ENCODE measurements at regions of chr12 and their contacts with region 1.

Region 1: DNA sequence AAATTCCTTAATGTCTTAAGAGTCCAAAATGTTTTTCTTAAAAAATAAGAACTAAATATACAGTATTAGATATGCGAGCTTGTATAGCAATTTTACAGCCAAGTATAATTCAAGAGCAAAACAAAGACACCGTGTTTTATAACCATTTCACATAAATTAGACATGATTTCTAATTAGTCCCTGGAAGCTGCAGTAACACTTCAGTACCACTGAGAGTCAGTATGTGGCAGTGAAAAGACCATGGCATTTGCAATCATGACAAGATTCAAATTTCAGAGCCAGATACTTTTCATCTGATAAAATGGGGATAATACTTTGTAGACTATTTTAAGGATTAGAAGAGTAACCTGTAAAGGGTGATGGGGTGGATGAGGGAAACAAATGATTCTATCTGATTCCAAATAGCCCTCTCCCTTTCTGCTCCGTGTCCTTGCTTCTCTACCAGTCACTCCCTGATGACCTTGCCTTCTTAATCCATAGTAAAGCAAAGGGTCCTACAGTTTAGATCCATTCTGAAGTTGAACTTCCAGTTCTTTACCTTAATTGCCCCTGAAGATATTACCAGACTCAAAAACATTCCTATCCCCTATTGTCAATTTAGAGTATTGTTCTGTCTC is 145.4 kb upstream of the ABCD2 start:
- ATAC-seq: peak in 4 of 8 experiments; percentile 37 to 58 (median 50)
- H3K4me3 ChIP-seq: no peak overlapping the region
- H3K27ac ChIP-seq: no peak overlapping the region
- H3K4me1 ChIP-seq: peaks cover 3 to 4% of the 10 kb centered on the region in 2 donors

Region 2: GRCh38 chr12:39867631-39868327 is 102.7 kb after region 1 on chr12:
- in situ Hi-C with region 1: no loop called
- ATAC-seq: no peak
- H3K4me3 ChIP-seq: no peak overlapping the region
- H3K27ac ChIP-seq: no peak overlapping the region
- H3K4me1 ChIP-seq: no peaks in the 10 kb centered on the region

Region 3: DNA sequence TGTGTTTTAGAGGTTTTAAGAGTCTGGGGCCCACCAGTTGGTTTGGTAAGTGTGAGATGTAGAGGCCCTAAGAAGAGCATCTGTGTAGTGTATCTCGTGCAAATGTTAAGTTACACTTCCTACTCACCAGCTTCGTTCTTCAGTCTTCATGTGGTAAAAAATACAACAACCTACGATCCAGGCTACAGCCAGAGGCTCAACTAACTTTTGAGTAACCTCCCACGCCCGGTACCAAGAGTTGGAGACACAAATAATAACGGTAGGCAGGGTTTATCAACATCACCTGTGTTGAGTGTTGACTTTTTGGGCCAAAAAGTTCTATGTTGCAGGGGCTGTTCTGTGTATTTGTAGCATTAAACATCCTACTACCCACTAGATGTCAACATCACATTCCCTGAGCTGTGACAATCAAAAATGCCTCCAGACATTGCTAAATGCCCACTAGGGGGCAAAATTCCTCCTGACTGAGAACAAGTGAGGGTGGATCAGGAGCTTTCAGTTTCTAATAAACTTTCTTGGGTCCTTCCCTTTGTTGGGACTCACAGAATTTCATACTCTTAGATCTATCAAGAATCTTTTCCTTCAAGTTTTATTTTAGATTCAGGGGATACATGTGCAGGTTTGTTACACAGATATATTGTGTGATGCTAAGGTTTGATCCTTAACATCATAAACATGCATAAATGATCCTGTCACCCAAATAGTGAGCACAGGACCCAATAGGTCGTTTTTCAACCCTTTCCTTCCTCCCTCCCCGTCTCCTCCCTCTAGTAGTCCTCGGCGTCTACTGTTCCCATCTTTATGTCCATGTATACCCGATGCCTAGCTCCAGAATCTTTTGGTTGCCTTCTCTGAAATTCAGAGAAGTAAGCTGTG is 246.1 kb after region 1 on chr12:
- in situ Hi-C with region 1: loop called in 1 of 9 experiments (anchors 25 kb)
- ATAC-seq: peak in 4 of 8 experiments; percentile 76 to 97 (median 92)
- H3K4me3 ChIP-seq: no peak overlapping the region
- H3K27ac ChIP-seq: no peak overlapping the region
- H3K4me1 ChIP-seq: no peaks in the 10 kb centered on the region

Region 4: GRCh38 chr12:40107098-40107802 is 342.2 kb after region 1 on chr12:
- in situ Hi-C with region 1: loop called in 6 of 9 experiments (anchors 10 to 25 kb)
- ATAC-seq: peak in 6 of 8 experiments; percentile 7 to 21 (median 8)
- H3K4me3 ChIP-seq: no peak overlapping the region
- H3K27ac ChIP-seq: no peak overlapping the region
- H3K4me1 ChIP-seq: peaks cover 7 to 19% of the 10 kb centered on the region in 2 donors

Region 5: DNA sequence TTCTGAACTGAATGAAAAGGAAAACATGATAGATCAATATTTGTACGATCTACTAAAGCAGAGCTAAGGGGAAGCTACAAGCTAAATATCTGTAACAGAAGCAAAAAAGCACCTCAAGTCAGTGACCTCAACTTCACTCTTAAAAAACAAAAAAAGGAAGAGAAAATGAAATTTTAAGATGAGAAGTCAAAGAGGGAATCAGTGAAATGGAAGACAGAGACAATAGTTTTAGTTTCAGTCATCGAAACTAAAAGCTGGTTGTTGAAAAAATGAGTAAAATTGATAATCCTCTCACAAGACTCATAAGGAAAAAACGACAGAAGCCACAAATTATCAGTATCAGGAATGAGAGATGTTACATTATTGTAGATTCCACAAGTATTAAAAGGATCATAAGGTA is 352.8 kb after region 1 on chr12:
- in situ Hi-C with region 1: loop called in 5 of 9 experiments (anchors 10 to 25 kb)
- ATAC-seq: no peak
- H3K4me3 ChIP-seq: no peak overlapping the region
- H3K27ac ChIP-seq: no peak overlapping the region
- H3K4me1 ChIP-seq: no peaks in the 10 kb centered on the region

Region 6: DNA sequence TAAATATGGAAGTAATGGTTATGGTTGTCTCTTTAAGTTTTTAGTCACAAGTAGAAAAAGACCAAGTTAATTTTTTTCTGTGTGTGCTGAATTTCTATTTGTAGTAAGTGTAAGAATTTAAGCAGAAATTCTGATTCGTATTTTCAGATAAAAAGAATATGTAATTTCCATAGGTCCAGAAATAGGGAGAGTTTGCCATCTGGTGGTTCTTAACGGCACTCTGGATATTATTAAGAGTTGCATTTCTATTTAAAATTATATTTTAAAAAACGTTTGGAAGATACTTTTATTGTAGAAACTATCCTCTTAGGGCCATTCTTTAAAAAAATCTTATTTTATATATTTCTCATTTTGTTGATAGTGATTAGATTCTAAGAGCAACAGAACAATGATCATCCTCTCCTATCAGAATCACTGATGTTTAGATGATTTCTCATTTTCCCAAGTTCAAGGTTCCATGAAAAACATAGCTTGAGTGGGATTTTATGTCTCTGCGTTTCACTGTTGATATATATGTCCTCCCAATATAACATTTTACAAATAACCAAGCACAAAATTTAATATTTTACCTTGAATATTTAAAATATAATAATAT is 548.0 kb after region 1 on chr12:
- in situ Hi-C with region 1: loop called in 2 of 9 experiments (anchors 25 kb)
- ATAC-seq: no peak
- H3K4me3 ChIP-seq: no peak overlapping the region
- H3K27ac ChIP-seq: no peak overlapping the region
- H3K4me1 ChIP-seq: no peaks in the 10 kb centered on the region

Measured in motor neuron (in vitro differentiated cells).